CD8-positive, alpha-beta memory T cell (primary cell): ENCODE measurements at regions of chr3 and their contacts with region 1.

Region 1: DNA sequence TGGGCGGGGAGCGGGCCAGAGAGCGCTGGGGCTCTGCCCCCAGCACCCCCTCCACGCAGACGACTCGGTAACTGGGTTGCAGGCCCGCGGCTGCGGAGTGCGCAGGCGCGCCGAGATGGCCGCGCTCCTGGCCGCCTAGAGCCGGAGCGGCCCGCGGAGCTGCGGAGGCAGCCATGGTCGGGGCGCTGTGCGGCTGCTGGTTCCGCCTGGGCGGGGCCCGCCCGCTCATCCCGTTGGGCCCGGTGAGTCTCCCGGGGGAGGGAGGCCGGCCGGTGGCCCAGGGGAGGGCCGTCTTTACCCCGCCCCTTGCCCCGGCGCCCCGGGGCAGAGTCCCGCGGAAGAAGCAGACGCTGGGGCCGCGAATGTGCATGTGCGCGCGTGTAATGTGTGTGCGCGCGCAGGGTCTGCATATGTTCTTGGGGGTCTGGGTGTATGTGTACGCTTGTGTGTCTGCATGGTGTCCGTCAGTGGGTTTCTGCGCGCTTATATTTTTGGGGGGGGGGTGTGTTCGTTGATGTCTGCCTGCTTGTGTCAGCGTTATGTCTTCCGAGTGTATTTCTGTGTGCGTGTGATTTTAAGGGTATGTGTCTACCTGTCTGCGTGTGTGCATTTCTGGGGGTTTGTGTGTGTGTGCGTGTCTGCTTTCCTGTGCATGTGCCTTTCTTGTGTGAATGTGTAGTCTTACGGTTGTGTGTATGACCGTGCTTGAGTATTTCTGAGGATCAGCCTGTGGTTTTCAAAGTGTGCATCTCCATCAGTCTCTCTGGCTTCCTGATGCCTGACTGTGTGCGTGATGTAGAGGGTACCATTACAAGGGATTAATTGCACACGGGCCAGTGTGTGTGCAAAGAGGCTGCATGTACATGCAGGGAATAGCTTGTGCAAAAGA is at the start of gene ABHD14A:
- DNase-seq: peak; percentile 67 to 84 (median 78)
- H3K4me3 ChIP-seq: peak within 1 kb of the TSS; percentile 97
- H3K4me3 Mint-ChIP-seq: peak within 1 kb of the TSS; percentile 89 to 99 (median 95)
- H3K27ac ChIP-seq: peak within 1 kb of the TSS; percentile 83
- H3K27ac Mint-ChIP-seq: peak within 1 kb of the TSS; percentile 87 to 98 (median 94)
- H3K4me1 ChIP-seq: peaks cover 32% of the 10 kb centered on the region
- H3K4me1 Mint-ChIP-seq: peaks cover 25 to 50% (median 46%) of the 10 kb centered on the region in 3 donors
- H3K27me3 ChIP-seq: no peaks in the 10 kb centered on the region
- H3K27me3 Mint-ChIP-seq: no peaks in the 10 kb centered on the region
- total RNA-seq, gene ABHD14A: 14.4 to 16.0 TPM

Region 2: DNA sequence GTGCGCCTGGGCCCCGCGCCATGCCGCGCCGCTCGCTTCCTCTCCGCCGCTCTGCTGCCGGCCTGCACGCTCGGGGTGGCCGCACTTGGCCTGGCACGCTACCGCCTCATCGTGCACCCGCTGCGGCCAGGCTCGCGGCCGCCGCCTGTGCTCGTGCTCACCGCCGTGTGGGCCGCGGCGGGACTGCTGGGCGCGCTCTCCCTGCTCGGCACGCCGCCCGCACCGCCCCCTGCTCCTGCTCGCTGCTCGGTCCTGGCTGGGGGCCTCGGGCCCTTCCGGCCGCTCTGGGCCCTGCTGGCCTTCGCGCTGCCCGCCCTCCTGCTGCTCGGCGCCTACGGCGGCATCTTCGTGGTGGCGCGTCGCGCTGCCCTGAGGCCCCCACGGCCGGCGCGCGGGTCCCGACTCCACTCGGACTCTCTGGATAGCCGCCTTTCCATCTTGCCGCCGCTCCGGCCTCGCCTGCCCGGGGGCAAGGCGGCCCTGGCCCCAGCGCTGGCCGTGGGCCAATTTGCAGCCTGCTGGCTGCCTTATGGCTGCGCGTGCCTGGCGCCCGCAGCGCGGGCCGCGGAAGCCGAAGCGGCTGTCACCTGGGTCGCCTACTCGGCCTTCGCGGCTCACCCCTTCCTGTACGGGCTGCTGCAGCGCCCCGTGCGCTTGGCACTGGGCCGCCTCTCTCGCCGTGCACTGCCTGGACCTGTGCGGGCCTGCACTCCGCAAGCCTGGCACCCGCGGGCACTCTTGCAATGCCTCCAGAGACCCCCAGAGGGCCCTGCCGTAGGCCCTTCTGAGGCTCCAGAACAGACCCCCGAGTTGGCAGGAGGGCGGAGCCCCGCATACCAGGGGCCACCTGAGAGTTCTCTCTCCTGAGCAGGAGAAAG is 19.1 kb before region 1 on chr3:
- CTCF ChIA-PET with region 1: interaction called, 16 read pairs
- POLR2A ChIA-PET with region 1: interaction called, 7 read pairs
- DNase-seq: peak in 3 of 5 donors; percentile 24 to 55 (median 52)
- H3K4me3 ChIP-seq: peak overlapping the region; percentile 28
- H3K4me3 Mint-ChIP-seq: peak overlapping the region; percentile 15 to 69 (median 50)
- H3K27ac ChIP-seq: no peak overlapping the region
- H3K27ac Mint-ChIP-seq: no peak overlapping the region
- H3K4me1 ChIP-seq: peaks cover 6% of the 10 kb centered on the region
- H3K4me1 Mint-ChIP-seq: peaks cover 5 to 9% (median 6%) of the 10 kb centered on the region in 3 donors
- H3K27me3 ChIP-seq: peaks cover 18% of the 10 kb centered on the region
- H3K27me3 Mint-ChIP-seq: peaks cover 20 to 42% of the 10 kb centered on the region in 2 donors

Region 3: GRCh38 chr3:51963951-51964451 is 11.2 kb before region 1 on chr3:
- CTCF ChIA-PET with region 1: interaction called, 16 read pairs
- POLR2A ChIA-PET with region 1: interaction called, 3 read pairs
- DNase-seq: no peak
- H3K4me3 ChIP-seq: no peak overlapping the region
- H3K4me3 Mint-ChIP-seq: no peak overlapping the region
- H3K27ac ChIP-seq: no peak overlapping the region
- H3K27ac Mint-ChIP-seq: no peak overlapping the region
- H3K4me1 ChIP-seq: peaks cover 16% of the 10 kb centered on the region
- H3K4me1 Mint-ChIP-seq: peaks cover 13 to 30% (median 16%) of the 10 kb centered on the region in 3 donors
- H3K27me3 ChIP-seq: no peaks in the 10 kb centered on the region
- H3K27me3 Mint-ChIP-seq: peaks cover 0 to 8% of the 10 kb centered on the region in 2 donors

Region 4: DNA sequence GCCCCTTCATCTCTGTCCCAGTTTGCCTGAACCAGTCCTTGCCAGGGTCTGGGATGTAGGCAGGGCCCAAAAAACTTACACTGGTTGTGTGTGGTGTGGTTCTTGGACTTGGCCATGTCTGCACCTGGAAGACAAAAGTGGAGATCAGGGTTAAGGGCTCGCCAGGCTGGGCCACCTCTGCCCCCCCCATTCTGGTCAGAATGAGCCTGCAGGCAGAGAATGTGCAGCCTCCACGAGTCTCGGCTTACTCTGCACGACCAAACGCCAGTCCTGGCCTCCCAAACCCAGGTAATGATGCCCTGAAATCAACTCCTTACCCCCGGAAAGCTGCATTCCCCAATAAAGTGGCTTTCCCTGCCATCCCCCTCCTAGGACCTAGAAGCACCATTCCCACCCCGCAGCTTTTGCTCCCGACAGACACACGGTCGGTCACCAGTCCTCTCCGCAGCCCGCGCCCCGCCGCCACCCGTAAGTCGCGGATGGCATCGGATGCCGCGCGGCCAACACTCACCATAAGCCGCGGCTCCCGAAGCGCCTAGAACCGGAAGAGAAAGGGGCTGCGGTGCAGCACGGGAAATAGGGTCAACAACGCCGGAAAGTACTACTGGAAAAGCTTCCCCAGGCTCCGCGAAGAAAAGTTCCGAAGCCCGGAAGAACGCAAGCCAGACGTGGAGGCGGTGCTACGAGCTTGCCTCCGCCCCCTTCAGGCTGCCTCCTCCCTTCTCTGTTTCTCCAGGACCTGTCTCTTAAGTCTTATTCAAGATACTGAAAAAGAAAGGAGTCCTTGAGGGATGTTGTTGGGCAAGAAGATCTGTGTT is 20.3 kb after region 1 on chr3 and contains the start of gene RPL29:
- CTCF ChIA-PET with region 1: interaction called, 19 read pairs
- POLR2A ChIA-PET with region 1: interaction called, 5 read pairs
- DNase-seq: peak; percentile 84 to 91 (median 90)
- H3K4me3 ChIP-seq: peak within 1 kb of the TSS; percentile 97
- H3K4me3 Mint-ChIP-seq: peak within 1 kb of the TSS; percentile 94 to 100 (median 100)
- H3K27ac ChIP-seq: peak within 1 kb of the TSS; percentile 91
- H3K27ac Mint-ChIP-seq: peak within 1 kb of the TSS; percentile 91 to 100 (median 100)
- H3K4me1 ChIP-seq: peaks cover 17% of the 10 kb centered on the region
- H3K4me1 Mint-ChIP-seq: peaks cover 30 to 49% (median 46%) of the 10 kb centered on the region in 3 donors
- H3K27me3 ChIP-seq: no peaks in the 10 kb centered on the region
- H3K27me3 Mint-ChIP-seq: peaks cover 0 to 1% of the 10 kb centered on the region in 2 donors
- total RNA-seq, gene RPL29: 1,367 to 1,382 TPM